Left ventricle myocardium superior (tissue), 1 donor: ENCODE measurements at regions of chr13 and their contacts with region 1.

Region 1: GRCh38 chr13:85405316-85405897 is 393.8 kb downstream of the SLITRK6 start:
- DNase-seq: no peak
- ATAC-seq: no peak

Region 2: GRCh38 chr13:85266331-85266730 is 139.1 kb before region 1 on chr13:
- intact Hi-C with region 1: no loop called
- DNase-seq: no peak
- ATAC-seq: no peak

Region 3: DNA sequence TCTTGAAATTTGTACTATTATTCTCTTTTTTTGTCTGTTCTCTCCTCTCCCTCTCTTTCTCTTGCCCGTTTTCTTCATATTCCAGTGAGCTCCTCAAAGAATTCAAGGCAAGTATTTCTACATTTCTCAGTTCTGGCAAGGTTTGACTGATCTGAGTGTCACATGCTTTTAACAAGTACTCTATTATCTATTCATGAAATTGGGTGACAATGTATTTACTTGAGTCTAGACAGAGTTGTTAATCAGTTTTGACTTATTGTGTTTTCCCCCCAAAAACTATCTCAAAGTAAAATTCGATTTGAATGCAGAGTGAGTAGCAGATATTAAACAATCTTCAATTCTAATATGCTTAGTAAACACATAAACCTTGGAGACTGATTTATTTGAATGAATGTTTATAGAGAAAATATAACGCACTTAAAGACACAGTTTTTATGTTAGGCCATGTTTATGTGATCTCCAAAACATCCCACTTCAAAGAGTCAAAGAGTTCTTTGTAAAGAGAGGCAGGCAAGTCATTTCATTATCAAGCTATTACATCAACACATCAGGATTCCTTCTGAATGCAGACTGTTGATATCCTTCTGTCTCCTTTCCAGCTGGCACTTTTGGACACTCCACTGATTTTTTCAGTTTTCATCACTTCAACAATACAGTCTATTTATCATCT is 227.3 kb after region 1 on chr13:
- intact Hi-C with region 1: loop called (anchors 2 kb)
- DNase-seq: no peak
- ATAC-seq: no peak